ENCODE measurements at regions of chr6 and their contacts with region 1.

Region 1: GRCh38 chr6:71396410-71396801 is 107.8 kb downstream of the OGFRL1 start:
- DNase-seq: no peak
- H3K4me3 ChIP-seq: no peak overlapping the region
- H3K27ac ChIP-seq: no peak overlapping the region
- H3K4me1 ChIP-seq: peaks cover 2 to 22% of the 10 kb centered on the region in 2 experiments
- H3K27me3 ChIP-seq: no peaks in the 10 kb centered on the region
- CTCF ChIP-seq: no peak
- EP300 ChIP-seq: no peak
- RAD21 ChIP-seq: no peak

Region 2: DNA sequence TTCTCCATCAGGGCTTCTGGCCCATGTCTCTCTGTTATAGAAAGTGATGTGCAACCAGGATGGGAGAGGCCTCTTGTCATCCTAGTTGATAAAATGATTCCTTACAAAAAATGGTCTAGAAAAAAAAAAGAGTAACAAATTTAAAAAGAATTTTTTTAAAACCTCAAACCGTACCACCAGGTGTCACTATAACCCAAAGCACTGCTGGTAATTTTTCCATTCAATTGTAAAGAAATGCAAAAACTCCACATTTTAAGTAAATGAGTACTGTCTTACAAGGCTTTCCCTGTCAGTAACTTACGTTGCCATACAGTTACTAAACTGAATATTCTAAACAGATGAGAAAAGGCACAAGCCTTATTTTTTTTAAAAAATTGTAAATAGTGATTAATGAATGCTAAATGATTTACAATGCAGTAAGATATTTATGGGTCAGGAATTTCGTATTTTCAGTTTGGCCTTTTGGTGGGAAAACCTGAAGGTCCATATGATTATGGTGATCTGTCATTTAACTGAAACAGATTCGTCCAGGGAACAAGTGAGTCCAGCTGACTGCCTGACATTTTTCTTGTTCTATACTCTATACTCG is 12.4 kb before region 1 on chr6:
- CTCF ChIA-PET with region 1: interaction called, 11 read pairs
- POLR2A ChIA-PET with region 1: no interaction called
- DNase-seq: peak; percentile 15
- H3K4me3 ChIP-seq: no peak overlapping the region; a peak in 1 of 4 replicates
- H3K27ac ChIP-seq: no peak overlapping the region
- H3K4me1 ChIP-seq: peaks cover 0 to 24% of the 10 kb centered on the region in 2 experiments; a peak in 2 of 4 replicates
- H3K27me3 ChIP-seq: no peaks in the 10 kb centered on the region
- CTCF ChIP-seq: peak; percentile 80
- EP300 ChIP-seq: no peak
- RAD21 ChIP-seq: peak; percentile 86

Region 3: GRCh38 chr6:71410681-71411080 is 14.3 kb after region 1 on chr6:
- CTCF ChIA-PET with region 1: no interaction called
- POLR2A ChIA-PET with region 1: no interaction called
- DNase-seq: no peak
- H3K4me3 ChIP-seq: no peak overlapping the region
- H3K27ac ChIP-seq: no peak overlapping the region
- H3K4me1 ChIP-seq: peaks cover 3 to 13% of the 10 kb centered on the region in 2 experiments; a peak in 2 of 4 replicates
- H3K27me3 ChIP-seq: no peaks in the 10 kb centered on the region
- CTCF ChIP-seq: no peak
- EP300 ChIP-seq: no peak
- RAD21 ChIP-seq: no peak

Measured in SK-N-SH (cell line).